MCF 10A (cell line): ENCODE measurements at regions of chrX and their contacts with region 1.

Region 1: DNA sequence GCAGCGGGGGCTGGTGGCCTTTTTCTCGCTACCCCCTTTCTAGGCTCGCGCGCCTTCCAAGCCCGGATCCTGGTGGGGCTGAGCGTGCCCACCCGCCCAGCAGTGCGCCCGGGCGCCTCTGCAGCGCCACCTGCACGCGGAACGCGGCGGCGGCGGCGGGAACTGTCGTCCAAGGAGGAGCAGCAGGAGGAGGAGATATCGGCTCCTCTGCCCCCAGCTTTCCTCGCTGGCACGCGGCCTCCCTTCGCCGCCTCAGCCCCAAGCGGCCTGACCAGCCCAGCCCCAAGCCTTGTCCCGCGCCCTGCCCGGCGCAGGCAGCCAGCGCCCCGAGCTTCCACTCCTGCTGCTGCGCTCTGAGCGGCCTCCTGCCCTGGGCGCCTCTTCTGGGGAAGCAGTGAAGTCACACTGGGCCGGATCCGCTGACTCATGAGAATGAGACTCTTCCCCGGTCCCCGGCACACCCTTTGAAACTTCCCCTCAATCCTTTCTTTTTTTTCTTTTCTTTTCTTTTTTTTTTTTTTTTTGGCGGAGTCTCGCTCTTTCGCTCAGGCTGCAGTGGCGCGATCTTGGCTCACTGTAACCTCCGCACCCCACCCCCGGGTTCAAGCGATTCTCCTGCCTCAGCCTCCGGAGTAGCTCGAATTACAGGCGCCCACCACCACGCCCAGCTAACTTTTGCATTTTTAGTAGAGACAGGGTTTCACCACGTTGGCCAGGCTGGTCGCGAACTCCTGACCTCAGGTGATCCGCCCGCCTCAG is 10.6 kb upstream of the ELF4 start:
- DNase-seq: peak; percentile 77
- H3K4me3 Mint-ChIP-seq: peak overlapping the region; percentile 61
- H3K27ac Mint-ChIP-seq: peak overlapping the region; percentile 51
- H3K4me1 Mint-ChIP-seq: peaks cover 25% of the 10 kb centered on the region
- H3K27me3 Mint-ChIP-seq: peaks cover 12% of the 10 kb centered on the region
- CTCF ChIP-seq: peak; percentile 37

Region 2: DNA sequence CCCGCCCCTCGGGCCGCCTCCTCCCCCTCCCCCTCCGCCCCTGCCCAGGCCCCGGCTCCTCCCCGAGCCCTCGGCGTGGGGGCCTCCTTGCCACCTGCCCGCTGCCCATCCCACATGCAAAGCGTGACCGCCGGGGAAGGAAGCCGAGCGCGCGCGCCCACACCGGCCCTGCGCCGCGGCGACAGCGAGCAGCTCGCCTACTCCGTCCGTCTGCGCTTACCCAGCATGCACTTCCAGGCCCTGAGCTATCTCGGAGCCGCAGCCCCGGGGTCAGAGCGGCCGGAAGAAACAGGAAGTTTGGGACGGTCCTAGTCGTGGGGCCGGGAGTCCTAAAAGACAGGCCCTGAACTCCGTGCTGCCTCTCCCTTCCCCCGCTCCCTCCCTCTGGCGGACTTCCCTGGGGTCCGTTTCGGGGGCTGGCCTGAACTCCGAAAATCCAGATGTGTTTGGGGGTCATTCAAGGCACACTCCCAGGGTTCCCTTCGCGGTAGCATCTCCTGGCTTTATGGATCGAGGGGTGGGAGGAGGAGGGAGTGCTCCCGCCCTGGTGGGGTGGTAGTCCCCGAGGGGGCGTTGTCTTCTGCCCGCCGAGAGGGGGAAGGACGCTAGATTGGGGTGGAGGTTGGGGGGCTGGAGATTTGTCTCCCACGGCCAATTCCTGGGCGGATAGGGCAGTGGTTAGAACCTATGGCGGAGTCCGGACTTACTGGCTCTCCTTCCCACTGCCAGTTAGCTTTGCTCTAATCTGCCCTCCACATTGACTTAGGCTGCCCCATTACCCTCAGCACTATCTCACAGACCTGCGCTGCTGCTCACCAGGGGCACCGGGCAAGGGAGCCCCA is 163.5 kb before region 1 on chrX:
- CTCF ChIA-PET with region 1: no interaction called
- POLR2A ChIA-PET with region 1: no interaction called
- intact Hi-C with region 1: no loop called
- DNase-seq: no peak
- H3K4me3 Mint-ChIP-seq: no peak overlapping the region
- H3K27ac Mint-ChIP-seq: no peak overlapping the region
- H3K4me1 Mint-ChIP-seq: no peaks in the 10 kb centered on the region
- H3K27me3 Mint-ChIP-seq: peaks cover 21% of the 10 kb centered on the region
- CTCF ChIP-seq: no peak

Region 3: DNA sequence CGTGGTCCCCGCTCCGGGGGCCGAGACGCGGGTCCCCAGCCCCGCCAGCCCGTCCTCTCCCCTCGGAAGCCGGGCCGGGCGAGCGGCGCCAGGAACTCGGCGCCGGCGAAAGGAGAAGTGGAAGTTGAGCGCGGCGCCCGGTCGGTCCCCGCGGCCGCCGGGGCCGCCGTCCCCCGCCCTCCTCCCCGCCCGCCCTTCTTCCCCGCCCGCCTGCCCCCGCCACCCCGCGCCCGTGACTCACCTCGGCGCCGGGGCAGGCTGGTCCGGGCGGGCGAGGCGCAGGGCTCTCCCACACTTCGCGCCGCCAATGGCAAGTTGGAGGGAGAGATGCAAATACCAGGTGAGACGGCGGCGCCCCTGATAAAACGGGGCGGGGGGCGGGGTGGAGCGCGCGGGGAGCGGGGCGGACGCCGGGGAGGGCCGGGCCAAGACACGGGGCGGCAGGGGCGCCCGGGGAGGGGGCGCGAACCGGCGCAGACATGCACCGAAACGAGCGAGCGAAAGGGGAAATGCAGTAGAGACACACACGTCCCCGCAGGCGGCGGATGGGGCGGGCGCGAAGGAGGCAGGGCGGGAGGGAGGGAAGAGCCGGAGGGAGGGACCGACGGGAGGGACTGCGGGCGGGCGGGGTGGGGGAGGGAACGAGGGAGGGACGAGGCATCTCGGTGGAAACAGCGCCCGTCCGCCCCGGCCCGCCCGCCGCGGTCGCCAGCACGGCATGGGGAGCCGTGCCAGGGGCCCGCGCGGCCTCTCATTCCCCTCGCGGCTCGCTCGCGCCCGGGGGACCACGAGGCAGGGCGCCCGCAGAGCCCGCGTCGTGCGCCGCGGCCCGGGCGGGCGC is 10.3 kb before region 1 on chrX and contains the start of gene ELF4:
- CTCF ChIA-PET with region 1: interaction called, 11 read pairs
- POLR2A ChIA-PET with region 1: interaction called, 39 read pairs
- intact Hi-C with region 1: no loop called
- DNase-seq: peak; percentile 79
- H3K4me3 Mint-ChIP-seq: peak within 1 kb of the TSS; percentile 88
- H3K27ac Mint-ChIP-seq: peak within 1 kb of the TSS; percentile 81
- H3K4me1 Mint-ChIP-seq: peaks cover 19% of the 10 kb centered on the region
- H3K27me3 Mint-ChIP-seq: peaks cover 14% of the 10 kb centered on the region
- CTCF ChIP-seq: no peak
- total RNA-seq, gene ELF4: 19.5 and 23.6 TPM in 2 replicates